ENCODE measurements at regions of chr10 and their contacts with region 1.

Region 1: DNA sequence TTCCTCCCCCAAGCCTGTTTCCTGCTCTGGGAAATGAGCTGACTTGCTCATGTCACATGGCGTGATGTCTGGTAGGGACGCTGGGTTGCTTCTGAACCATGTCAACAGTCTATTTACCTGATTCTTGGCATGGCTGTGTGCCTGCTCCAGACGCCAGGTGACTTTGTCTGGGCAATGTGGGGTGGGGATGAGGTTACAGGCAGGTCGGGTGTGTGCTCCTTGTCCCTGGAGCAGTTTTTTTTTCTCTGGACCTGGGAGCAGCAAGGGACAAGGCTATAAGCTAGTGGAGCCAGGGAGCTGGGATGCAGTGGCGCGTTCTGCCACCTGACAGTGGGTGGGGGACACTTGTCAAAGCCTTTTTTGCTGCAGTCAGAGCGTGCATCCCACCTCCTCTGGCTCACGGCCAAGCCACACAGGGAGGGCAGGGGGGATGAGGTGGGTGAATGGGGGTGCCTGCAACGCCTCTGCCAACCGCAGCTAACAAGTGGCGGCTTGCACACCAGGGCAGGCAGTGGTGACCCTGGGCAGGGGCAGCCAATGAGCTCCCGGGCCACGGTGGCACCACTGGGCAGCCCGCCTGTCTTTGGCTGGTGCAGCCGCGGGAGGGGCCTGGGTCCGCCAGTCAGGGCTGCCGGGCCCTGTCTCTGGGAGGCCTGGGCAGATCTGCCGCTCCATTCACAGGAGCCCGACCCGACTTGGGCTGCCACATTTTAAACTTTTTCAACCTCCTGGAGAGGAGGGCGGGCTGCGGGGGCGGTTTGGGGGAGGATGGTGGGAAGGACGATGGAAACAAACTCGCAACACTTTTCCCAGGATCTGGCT is 22.9 kb downstream of the DNAJB12 start:
- DNase-seq: peak; percentile 93
- H3K4me3 Mint-ChIP-seq: peak overlapping the region; percentile 88
- H3K27ac Mint-ChIP-seq: peak overlapping the region; percentile 99
- H3K4me1 Mint-ChIP-seq: peaks cover 81% of the 10 kb centered on the region
- H3K27me3 Mint-ChIP-seq: no peaks in the 10 kb centered on the region

Region 2: GRCh38 chr10:71933651-71934050 is 398.2 kb before region 1 on chr10:
- intact Hi-C with region 1: loop called (anchors 10 kb)
- DNase-seq: peak; percentile 84
- H3K4me3 Mint-ChIP-seq: peak overlapping the region; percentile 54
- H3K27ac Mint-ChIP-seq: peak overlapping the region; percentile 79
- H3K4me1 Mint-ChIP-seq: peaks cover 17% of the 10 kb centered on the region
- H3K27me3 Mint-ChIP-seq: peaks cover 8% of the 10 kb centered on the region

Region 3: DNA sequence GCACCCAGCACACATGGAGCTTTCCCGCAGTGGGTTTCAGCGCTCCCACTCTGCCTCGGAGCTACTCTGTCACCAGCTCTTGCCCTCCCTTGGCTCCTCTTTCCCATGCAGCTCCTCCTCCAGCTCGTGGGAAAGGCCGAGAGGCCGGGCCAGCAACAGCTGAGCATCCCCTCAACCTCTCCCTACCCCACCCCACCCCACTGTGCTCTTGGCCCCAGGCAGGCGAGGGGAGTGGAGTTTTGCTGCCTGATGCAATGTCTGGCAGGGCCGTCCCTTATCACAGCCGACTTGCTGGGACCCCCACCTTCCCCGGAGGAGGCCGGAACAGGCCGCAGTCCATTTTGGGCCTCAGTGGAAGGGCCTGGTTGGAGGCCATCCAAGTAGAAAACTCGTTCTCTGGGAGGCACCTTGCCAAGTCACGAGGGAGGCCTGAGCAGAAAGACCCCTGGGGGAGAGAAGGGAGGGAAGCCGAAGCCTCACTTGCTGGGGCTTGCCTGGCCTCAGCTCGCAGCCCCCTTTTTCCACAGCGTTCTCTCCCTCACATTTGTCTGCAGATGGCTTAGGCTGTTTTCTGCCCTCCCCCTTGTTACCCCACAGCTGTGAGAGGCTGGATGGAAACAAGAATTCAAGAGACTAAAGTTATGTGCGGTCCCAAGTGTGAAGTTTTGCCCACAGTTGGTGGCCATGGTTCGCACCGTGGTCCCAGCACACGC is 332.3 kb before region 1 on chr10:
- intact Hi-C with region 1: no loop called
- DNase-seq: no peak
- H3K4me3 Mint-ChIP-seq: no peak overlapping the region
- H3K27ac Mint-ChIP-seq: no peak overlapping the region
- H3K4me1 Mint-ChIP-seq: no peaks in the 10 kb centered on the region
- H3K27me3 Mint-ChIP-seq: no peaks in the 10 kb centered on the region

Region 4: DNA sequence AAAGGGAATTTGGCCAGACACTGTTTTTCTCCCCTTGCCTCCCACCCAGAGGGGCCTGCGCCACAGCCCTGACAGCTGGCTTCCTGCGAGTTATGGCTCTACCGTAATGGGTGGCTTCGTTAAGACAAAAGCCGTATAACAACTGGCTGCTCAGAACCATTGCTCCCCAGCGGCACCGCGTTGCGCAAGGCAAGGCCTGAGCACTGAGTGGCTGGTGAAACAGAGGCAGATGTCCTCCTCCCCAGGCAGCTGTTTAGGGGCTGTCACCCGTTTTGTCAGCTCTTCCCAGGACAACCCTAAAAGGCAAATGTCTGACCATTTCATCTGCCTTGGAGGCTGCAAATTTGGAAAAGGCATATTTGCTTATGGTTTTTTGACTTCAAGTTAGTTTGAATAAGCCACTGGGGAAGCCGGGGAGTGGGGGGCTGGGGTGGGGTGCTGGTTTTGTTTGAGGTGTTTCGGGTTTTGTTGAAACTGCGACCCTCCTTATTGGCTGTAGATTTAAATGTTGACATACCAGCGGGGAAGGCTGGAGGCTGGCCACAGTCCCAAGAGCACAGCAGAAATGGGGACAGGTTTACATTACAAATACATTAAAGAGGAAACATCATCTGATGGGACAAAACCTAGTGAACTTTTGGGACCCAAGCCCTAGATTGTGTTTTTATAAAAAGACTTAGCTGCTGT is 242.8 kb before region 1 on chr10:
- intact Hi-C with region 1: loop called (anchors 5 kb)
- DNase-seq: peak; percentile 87
- H3K4me3 Mint-ChIP-seq: peak overlapping the region; percentile 97
- H3K27ac Mint-ChIP-seq: peak overlapping the region; percentile 98
- H3K4me1 Mint-ChIP-seq: peaks cover 60% of the 10 kb centered on the region
- H3K27me3 Mint-ChIP-seq: no peaks in the 10 kb centered on the region

Region 5: GRCh38 chr10:72223743-72224101 is 108.1 kb before region 1 on chr10:
- intact Hi-C with region 1: loop called (anchors 2 kb)
- DNase-seq: no peak
- H3K4me3 Mint-ChIP-seq: no peak overlapping the region
- H3K27ac Mint-ChIP-seq: peak overlapping the region; percentile 27
- H3K4me1 Mint-ChIP-seq: peaks cover 32% of the 10 kb centered on the region
- H3K27me3 Mint-ChIP-seq: no peaks in the 10 kb centered on the region

Region 6: GRCh38 chr10:72248468-72249151 is 83.2 kb before region 1 on chr10:
- intact Hi-C with region 1: loop called (anchors 1 kb)
- DNase-seq: peak; percentile 94
- H3K4me3 Mint-ChIP-seq: peak overlapping the region; percentile 82
- H3K27ac Mint-ChIP-seq: peak overlapping the region; percentile 96
- H3K4me1 Mint-ChIP-seq: peaks cover 65% of the 10 kb centered on the region
- H3K27me3 Mint-ChIP-seq: no peaks in the 10 kb centered on the region

Region 7: DNA sequence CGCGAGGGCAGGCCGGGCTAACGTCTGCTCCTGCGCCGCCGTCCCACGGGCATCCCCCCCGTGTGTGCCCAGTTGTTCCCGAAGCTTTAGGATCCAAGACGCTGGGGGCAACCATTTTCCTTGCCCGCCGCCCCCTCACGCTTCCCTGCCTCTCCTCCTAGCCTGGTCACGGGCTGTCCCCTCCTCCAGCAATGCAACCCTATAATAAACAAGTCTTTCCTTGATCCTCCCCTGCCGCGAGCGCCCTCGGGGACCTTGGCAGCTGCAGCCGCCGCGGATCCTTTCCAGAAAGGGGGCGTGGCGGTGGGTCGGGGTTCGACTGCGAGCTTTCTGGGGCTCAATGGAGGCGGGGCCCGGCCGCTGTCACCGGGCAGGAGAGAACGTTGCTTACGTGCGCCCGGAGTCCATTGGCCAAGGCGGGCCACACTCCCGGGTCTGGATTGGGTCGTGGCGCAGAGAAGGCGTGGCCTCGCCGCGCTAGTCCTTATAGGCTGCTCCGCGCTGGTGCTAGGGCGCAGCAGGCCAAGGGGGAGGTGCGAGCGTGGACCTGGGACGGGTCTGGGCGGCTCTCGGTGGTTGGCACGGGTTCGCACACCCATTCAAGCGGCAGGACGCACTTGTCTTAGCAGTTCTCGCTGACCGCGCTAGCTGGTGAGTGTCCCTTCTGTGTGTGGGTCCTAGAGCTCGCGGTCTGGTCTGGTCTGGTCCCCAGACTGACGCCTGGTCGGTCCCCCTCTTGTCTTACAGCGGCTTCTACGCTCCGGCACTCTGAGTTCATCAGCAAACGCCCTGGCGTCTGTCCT is 58.2 kb before region 1 on chr10 and contains the start of gene DDIT4:
- intact Hi-C with region 1: loop called (anchors 1 kb)
- DNase-seq: peak; percentile 100
- H3K4me3 Mint-ChIP-seq: peak within 1 kb of the TSS; percentile 96
- H3K27ac Mint-ChIP-seq: peak within 1 kb of the TSS; percentile 92
- H3K4me1 Mint-ChIP-seq: peaks cover 51% of the 10 kb centered on the region
- H3K27me3 Mint-ChIP-seq: no peaks in the 10 kb centered on the region
- total RNA-seq, gene DDIT4: 260 and 271 TPM in 2 replicates

Region 8: DNA sequence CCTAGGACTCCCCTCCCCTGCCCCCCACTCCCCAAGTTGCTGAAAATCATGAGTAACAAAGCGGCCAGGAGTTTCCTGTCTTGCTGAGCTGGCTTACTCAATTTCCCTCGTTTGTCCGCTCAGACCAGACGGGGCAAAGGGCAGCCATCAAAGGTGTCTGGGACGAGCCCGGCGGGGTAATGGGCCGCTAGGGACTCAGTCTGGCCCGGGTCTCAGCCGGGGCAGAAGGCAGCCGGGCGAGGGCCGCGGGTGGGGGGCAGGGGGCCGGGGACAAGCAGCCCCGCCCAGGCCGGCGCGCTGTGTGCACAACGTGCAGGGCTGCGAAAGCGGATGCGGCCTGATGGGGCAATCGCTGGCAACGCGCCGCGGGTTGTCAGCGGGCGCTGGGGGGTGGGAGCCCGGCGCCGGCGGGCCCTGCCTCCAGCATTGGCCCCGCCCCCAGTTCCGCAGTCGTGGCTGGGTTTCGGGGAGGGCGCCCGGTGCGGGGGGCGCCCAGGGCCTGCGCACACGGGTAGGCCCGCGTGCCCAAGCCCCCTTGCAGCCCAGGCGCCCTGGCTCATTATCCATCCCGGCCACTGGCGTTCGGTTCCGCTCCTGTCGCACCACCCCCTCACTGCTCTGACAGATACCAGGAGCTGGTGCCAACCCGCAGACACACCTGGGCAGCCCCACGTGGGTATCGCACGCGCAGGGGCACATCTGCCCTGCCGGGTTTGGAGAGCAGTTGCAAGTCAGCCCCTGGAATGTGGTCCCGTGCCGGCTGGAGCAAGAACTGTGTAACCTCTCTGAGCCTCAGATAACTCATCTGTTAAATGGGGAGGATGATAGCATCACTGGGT is 12.2 kb before region 1 on chr10:
- intact Hi-C with region 1: loop called (anchors 1 kb)
- DNase-seq: peak; percentile 96
- H3K4me3 Mint-ChIP-seq: peak overlapping the region; percentile 85
- H3K27ac Mint-ChIP-seq: peak overlapping the region; percentile 99
- H3K4me1 Mint-ChIP-seq: peaks cover 61% of the 10 kb centered on the region
- H3K27me3 Mint-ChIP-seq: no peaks in the 10 kb centered on the region

Region 9: DNA sequence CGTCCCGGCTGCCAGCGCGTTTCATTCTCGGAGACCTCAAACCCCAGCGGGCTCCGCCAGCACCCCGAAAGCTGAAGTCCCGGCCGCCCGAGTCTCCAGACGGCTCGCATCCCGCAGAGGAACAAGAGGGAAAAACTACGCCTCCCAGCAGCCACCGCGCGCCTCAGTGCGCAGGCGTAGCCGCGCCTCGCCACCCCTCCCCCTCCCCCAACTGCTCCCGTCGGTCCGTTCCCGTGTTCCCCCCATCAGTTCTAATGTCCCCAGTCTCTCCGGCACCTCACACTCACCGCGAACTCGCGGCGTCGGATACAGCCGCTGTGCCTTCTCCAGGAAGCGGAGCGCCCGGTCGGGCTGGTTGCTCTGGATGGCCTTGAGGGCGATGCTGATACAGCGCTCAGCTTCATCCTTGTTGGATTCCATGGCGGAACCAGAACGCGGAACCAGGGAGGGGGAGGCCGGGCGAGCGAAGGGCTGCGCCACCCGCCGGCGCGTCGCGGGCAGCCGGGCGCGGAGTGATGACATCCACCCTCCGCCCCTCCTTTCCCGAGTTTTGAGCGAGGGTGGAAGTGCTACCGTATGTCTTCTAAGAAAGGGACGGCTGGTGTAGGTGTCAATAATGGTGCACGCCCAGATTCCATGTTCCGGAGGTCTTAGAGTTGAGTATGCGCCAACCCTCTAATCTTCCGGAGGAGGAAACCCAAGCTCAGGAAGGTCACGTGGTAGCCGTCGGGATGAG is 22.8 kb after region 1 on chr10 and contains the start of gene DNAJB12:
- intact Hi-C with region 1: no loop called
- DNase-seq: peak; percentile 97
- H3K4me3 Mint-ChIP-seq: peak within 1 kb of the TSS; percentile 90
- H3K27ac Mint-ChIP-seq: peak within 1 kb of the TSS; percentile 99
- H3K4me1 Mint-ChIP-seq: peaks cover 26% of the 10 kb centered on the region
- H3K27me3 Mint-ChIP-seq: no peaks in the 10 kb centered on the region
- total RNA-seq, gene DNAJB12: 32.5 and 35.1 TPM in 2 replicates